ENCODE measurements at regions of chr14 and their contacts with region 1.

Region 1: GRCh38 chr14:68961781-68962584 is 17.1 kb downstream of the ACTN1 start:
- DNase-seq: peak; percentile 72 to 80
- H3K4me3 ChIP-seq: no peak overlapping the region
- H3K27ac ChIP-seq: peak overlapping the region; percentile 74 to 95
- H3K4me1 ChIP-seq: peaks cover 37 to 40% of the 10 kb centered on the region in 2 donors
- H3K27me3 ChIP-seq: no peaks in the 10 kb centered on the region
- CTCF ChIP-seq: no peak
- POLR2A ChIP-seq: no peak

Region 2: DNA sequence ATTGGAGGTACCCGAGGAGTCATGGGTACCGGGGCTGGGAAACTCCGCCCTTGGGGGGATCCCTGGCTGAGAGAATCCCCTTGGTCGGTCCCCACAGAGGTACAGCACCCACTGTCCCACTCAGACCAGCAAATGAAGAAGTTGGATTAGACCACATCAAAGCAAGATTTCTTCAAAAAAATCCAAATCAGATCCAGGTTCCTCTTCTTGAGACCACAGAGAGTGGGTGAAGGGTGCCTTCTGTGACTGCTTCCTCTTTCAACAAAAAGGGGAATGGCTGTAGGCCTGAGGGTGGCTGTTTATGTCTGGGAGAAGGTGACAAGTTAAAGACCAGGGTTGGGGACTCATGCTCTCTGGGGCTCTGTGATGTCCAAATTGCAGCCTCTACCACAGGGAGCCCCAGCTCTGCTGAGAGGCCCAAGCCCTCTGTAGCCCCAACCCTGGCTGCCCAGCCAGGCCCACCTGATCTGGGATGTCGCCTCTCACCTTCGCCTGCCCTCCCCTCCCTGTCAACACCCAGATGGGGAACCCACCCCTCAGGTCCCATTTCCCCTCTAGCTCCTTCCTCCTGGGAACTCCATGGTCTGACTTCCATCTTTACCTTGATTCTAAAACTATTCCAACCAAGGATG is 220.0 kb before region 1 on chr14:
- intact Hi-C with region 1: no loop called
- DNase-seq: no peak
- H3K4me3 ChIP-seq: no peak overlapping the region
- H3K27ac ChIP-seq: no peak overlapping the region
- H3K4me1 ChIP-seq: no peaks in the 10 kb centered on the region
- H3K27me3 ChIP-seq: no peaks in the 10 kb centered on the region
- CTCF ChIP-seq: no peak
- POLR2A ChIP-seq: no peak

Region 3: GRCh38 chr14:68911594-68912227 is 50.3 kb before region 1 on chr14:
- intact Hi-C with region 1: loop called (anchors 10 kb)
- DNase-seq: peak; percentile 81 to 83
- H3K4me3 ChIP-seq: no peak overlapping the region
- H3K27ac ChIP-seq: peak overlapping the region; percentile 65 to 72
- H3K4me1 ChIP-seq: no peaks in the 10 kb centered on the region
- H3K27me3 ChIP-seq: no peaks in the 10 kb centered on the region
- CTCF ChIP-seq: peak; percentile 95 to 98 (median 97)
- POLR2A ChIP-seq: no peak

Region 4: GRCh38 chr14:69043596-69044260 is 81.7 kb after region 1 on chr14:
- intact Hi-C with region 1: no loop called
- DNase-seq: peak; percentile 52 to 68
- H3K4me3 ChIP-seq: no peak overlapping the region
- H3K27ac ChIP-seq: peak overlapping the region; percentile 76 to 89
- H3K4me1 ChIP-seq: peaks cover 16 to 36% of the 10 kb centered on the region in 2 donors
- H3K27me3 ChIP-seq: no peaks in the 10 kb centered on the region
- CTCF ChIP-seq: no peak
- POLR2A ChIP-seq: no peak

Region 5: DNA sequence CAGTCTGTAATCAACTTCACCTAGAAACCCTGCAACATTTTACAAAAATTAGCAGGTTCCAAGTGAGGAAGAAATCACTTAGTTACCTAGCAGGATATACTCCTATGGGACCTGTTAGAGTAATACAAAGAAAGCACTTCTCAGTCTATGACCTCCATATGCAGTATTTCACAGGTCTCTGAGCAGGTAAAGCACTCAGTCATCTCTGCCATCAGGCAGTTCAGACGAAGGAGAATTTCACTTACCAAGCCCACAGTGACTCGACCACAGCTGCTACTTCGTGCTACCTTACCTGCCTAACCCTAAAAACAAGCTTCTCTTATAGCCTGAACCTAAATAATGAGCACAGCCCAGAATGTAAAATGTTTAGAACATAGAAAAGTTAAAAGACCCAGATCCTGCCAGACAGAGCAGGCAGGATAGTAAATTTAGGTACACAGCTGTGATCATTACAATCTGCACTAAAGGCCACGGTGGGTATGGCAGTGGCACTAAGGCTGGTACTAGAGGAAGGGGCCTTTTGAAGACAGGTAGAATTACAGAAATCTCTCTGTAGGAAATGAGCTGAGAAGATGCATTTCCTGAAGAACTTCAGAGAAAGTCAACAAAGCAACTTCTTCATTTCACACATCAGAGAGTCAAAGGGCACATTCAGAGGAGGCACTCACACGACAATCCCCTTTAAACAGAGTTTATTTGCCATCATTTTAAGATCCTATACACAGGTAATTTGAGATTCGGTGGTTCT is 155.2 kb after region 1 on chr14:
- intact Hi-C with region 1: no loop called
- DNase-seq: no peak
- H3K4me3 ChIP-seq: no peak overlapping the region
- H3K27ac ChIP-seq: no peak overlapping the region
- H3K4me1 ChIP-seq: no peaks in the 10 kb centered on the region
- H3K27me3 ChIP-seq: no peaks in the 10 kb centered on the region
- CTCF ChIP-seq: no peak
- POLR2A ChIP-seq: no peak